Activated CD4-positive, alpha-beta T cell treated with anti-CD3 and anti-CD28 coated beads for 36 hours (primary cell): ENCODE measurements at regions of chr10 and their contacts with region 1.

Region 1: DNA sequence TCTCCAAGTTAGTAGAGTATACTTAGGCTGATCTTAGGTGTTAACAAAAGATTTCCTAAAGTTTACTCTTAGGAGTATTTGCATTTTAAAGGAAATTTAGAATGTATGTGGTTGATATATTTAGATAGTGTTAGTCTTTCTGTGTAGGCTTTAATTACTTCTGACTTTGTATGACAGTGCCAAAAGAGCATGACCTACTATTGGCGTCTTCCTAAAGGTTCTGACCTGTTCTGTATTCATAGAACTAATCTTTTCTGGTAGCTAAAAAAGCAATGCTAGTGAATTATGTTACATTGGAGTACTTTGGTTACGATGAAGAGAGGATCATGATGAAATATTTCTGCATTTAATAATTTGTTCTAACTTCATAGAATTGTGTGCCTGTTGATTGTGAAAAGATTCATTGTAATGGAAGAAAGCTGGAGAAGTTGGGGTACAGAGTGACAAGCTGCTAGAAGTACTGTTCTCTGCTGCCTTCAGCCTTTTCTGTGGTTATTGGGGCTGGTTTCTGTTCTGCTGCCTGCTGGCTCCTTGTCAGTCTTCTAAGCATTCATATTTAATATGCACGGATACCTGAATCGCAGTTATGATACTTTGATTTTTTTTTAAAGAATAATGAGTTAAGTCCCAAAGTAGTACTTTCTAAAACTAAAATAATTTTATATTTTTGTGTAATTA is 13.2 kb downstream of the WAC start:
- DNase-seq: no peak
- ATAC-seq: no peak
- H3K4me3 Mint-ChIP-seq: no peak overlapping the region
- H3K27ac Mint-ChIP-seq: peak overlapping the region; percentile 56
- H3K4me1 Mint-ChIP-seq: peaks cover 74% of the 10 kb centered on the region
- H3K27me3 Mint-ChIP-seq: no peaks in the 10 kb centered on the region

Region 2: GRCh38 chr10:27041196-27041595 is 1504.9 kb before region 1 on chr10:
- CTCF ChIA-PET with region 1: no interaction called
- POLR2A ChIA-PET with region 1: no interaction called
- intact Hi-C with region 1: no loop called
- DNase-seq: no peak
- ATAC-seq: no peak
- H3K4me3 Mint-ChIP-seq: no peak overlapping the region
- H3K27ac Mint-ChIP-seq: no peak overlapping the region
- H3K4me1 Mint-ChIP-seq: no peaks in the 10 kb centered on the region
- H3K27me3 Mint-ChIP-seq: no peaks in the 10 kb centered on the region

Region 3: DNA sequence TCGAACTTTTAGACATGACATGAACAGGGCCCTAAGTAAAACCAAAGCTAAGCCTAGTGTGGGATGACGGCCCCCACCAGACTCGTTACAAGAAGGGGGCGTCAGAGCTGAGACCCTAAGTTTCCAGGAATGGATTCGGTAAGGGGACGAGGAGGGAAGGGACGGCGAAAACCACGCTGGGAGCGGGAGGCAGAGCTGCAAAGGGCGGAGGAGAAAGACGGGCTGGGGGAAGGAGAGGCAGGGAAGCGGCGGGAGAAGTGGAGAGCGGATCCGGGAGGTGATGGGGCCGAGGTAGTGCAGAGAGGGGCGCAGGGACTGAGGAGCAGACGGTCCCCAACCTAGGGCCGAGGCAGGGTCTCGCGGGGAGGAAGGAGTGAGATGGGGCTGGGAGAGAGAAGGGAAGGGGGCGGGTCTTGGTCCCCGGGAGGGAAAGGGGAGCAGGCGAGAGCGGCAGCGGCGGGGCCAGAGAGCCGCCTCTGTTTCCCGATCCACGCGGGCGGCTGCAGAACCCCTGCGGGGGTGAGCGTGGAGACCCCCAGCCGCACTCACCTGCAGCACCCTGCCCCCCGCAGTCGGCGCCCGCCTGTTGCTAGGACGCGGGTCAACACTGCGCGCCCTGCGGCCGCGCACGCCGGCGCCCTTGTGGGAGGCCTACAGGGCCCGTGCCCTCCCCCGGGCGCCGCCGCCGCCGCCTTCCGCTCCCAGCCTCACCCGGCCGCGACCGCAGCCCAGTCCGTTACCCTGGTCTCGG is 547.7 kb before region 1 on chr10:
- CTCF ChIA-PET with region 1: no interaction called
- POLR2A ChIA-PET with region 1: no interaction called
- intact Hi-C with region 1: no loop called
- DNase-seq: peak; percentile 53
- ATAC-seq: peak; percentile 75
- H3K4me3 Mint-ChIP-seq: peak overlapping the region; percentile 72
- H3K27ac Mint-ChIP-seq: peak overlapping the region; percentile 7
- H3K4me1 Mint-ChIP-seq: peaks cover 10% of the 10 kb centered on the region
- H3K27me3 Mint-ChIP-seq: peaks cover 34% of the 10 kb centered on the region

Region 4: DNA sequence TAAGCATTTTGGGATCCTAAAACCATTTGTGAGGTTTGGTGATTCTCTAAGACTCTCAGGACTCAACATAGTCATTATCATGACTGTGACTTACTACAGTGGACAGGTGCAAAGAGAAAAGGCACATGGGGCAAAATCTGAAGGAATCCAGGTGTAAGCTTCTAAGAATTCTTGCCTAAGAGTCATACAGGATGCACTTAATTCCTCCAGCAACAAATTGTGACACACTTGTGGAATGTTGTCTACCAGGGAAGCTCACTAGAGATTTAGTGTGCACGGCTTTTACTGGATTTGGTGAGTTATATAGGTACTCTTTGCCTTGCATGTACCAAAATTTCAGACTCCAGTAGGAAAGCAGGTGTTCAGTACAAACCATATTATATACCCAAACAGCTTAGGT is 34.7 kb after region 1 on chr10:
- CTCF ChIA-PET with region 1: interaction called, 3 read pairs
- POLR2A ChIA-PET with region 1: no interaction called
- intact Hi-C with region 1: loop called in 1 of 2 experiments (anchors 5 kb)
- DNase-seq: no peak
- ATAC-seq: no peak
- H3K4me3 Mint-ChIP-seq: no peak overlapping the region
- H3K27ac Mint-ChIP-seq: peak overlapping the region; percentile 21
- H3K4me1 Mint-ChIP-seq: peaks cover 66% of the 10 kb centered on the region
- H3K27me3 Mint-ChIP-seq: no peaks in the 10 kb centered on the region